GM10248 (cell line): ENCODE measurements at regions of chr3 and their contacts with region 1.

Region 1: DNA sequence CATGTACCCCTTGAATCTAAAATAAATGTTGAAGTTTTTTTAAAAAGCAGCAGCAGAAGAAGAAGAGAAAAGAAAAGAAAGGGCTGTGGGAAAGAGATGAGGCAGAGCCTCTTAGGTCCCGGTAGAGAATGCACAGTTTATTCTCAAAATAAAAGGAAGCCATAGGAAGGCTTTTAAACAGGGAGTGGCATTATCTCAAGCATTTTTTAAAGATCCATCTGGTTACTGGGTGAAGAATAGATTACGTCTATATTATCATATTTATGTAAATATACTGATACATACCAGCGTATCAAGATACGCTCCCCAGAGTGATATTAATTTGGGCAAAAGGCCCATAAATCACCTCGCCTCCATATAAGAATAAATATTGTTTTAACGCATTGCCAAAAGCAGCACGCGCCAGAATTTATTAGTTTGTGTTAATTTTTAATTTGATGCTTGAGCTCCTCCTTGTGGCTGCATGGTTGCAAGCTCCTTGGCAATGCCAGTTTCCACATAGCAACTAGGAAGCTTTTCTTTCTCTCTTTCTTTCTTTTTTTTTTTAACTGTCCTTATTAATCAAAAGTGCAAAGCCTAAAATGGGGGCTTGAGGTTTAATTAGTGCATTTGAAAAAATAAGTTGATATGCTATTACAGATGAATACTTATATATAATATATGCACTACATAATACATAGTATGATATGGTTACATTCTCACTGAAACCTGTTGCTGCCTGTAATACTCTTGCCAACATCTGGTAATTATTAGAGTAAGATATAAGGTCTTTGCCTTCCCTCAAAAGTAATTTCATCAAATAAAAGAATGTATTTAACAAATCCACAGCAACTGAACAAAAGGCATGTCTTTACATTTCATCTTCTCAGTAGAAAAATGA is 242.8 kb upstream of the UBE2E2 start:
- DNase-seq: peak; percentile 27
- CTCF ChIP-seq: peak; percentile 83

Region 2: GRCh38 chr3:22565393-22565792 is 395.0 kb before region 1 on chr3:
- CTCF ChIA-PET with region 1: interaction called, 19 read pairs
- POLR2A ChIA-PET with region 1: no interaction called
- DNase-seq: no peak
- CTCF ChIP-seq: no peak

Region 3: DNA sequence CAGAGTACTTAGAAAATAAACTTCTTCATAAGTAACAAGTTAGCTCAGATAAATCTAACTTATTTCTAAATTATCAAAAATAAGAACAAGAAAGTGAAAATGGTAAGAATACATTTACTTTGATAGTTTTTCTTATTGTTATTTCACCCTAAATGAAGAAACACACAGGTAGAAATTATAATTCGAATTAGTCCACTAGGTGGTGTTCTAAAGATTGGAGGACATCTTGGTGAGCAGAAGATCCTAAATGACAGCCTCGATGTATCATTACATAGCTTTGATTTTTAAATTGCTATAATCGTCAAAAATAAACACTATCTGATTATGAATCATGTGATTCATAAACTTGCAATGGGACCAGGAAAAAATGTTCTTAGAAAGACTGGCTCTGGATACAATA is 38.0 kb before region 1 on chr3:
- CTCF ChIA-PET with region 1: interaction called, 14 read pairs
- POLR2A ChIA-PET with region 1: no interaction called
- DNase-seq: peak; percentile 18
- CTCF ChIP-seq: peak; percentile 40

Region 4: GRCh38 chr3:22971497-22972067 is 11.2 kb after region 1 on chr3:
- CTCF ChIA-PET with region 1: interaction called, 28 read pairs
- POLR2A ChIA-PET with region 1: no interaction called
- DNase-seq: no peak
- CTCF ChIP-seq: no peak